ENCODE measurements at regions of chrX and their contacts with region 1.

Region 1: GRCh38 chrX:24395775-24396174 is 35.3 kb downstream of the SUPT20HL1 start:
- DNase-seq: peak; percentile 16
- ATAC-seq: peak; percentile 66
- H3K4me3 Mint-ChIP-seq: no peak overlapping the region
- H3K27ac Mint-ChIP-seq: no peak overlapping the region
- H3K4me1 Mint-ChIP-seq: peaks cover 30% of the 10 kb centered on the region
- H3K27me3 Mint-ChIP-seq: no peaks in the 10 kb centered on the region
- CTCF ChIP-seq: no peak

Region 2: GRCh38 chrX:24259544-24260240 is 136.1 kb before region 1 on chrX:
- CTCF ChIA-PET with region 1: interaction called, 10 read pairs
- POLR2A ChIA-PET with region 1: no interaction called
- DNase-seq: peak; percentile 13
- ATAC-seq: no peak
- H3K4me3 Mint-ChIP-seq: no peak overlapping the region
- H3K27ac Mint-ChIP-seq: no peak overlapping the region
- H3K4me1 Mint-ChIP-seq: peaks cover 6% of the 10 kb centered on the region
- H3K27me3 Mint-ChIP-seq: no peaks in the 10 kb centered on the region
- CTCF ChIP-seq: no peak

Region 3: GRCh38 chrX:24435060-24435459 is 39.3 kb after region 1 on chrX:
- CTCF ChIA-PET with region 1: no interaction called
- POLR2A ChIA-PET with region 1: no interaction called
- DNase-seq: no peak
- ATAC-seq: no peak
- H3K4me3 Mint-ChIP-seq: no peak overlapping the region
- H3K27ac Mint-ChIP-seq: no peak overlapping the region
- H3K4me1 Mint-ChIP-seq: peaks cover 10% of the 10 kb centered on the region; the same call in 1 of the 2 replicates
- H3K27me3 Mint-ChIP-seq: peaks cover 52% of the 10 kb centered on the region
- CTCF ChIP-seq: no peak

Region 4: GRCh38 chrX:24471808-24472207 is 76.0 kb after region 1 on chrX:
- CTCF ChIA-PET with region 1: no interaction called
- POLR2A ChIA-PET with region 1: no interaction called
- DNase-seq: no peak
- ATAC-seq: no peak
- H3K4me3 Mint-ChIP-seq: no peak overlapping the region
- H3K27ac Mint-ChIP-seq: peak overlapping the region; percentile 43; the same call in 1 of the 2 replicates
- H3K4me1 Mint-ChIP-seq: peaks cover 44% of the 10 kb centered on the region
- H3K27me3 Mint-ChIP-seq: no peaks in the 10 kb centered on the region
- CTCF ChIP-seq: no peak

Region 5: DNA sequence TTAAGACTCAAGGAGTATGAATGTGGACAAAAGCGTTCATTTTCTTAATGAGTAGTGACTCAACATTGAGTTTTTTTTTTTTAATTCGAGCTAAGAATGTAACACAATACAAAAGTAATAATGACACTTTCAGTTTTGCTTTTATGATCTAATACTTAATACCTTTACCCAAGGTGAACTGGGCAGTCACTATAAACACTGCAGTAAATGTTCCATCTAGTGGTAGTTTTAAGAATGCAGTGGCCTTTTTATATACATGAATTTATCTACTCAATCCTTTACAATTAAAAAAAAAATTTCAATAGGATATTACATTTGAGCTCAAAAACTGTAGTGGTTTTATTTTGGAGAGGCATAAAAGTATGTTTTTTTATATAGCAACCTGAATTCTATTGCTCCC is 103.2 kb after region 1 on chrX:
- CTCF ChIA-PET with region 1: interaction called, 33 read pairs
- POLR2A ChIA-PET with region 1: interaction called, 3 read pairs
- DNase-seq: no peak
- ATAC-seq: no peak
- H3K4me3 Mint-ChIP-seq: no peak overlapping the region
- H3K27ac Mint-ChIP-seq: no peak overlapping the region
- H3K4me1 Mint-ChIP-seq: peaks cover 33% of the 10 kb centered on the region
- H3K27me3 Mint-ChIP-seq: no peaks in the 10 kb centered on the region
- CTCF ChIP-seq: no peak